ENCODE measurements at regions of chr18 and their contacts with region 1.

Region 1: GRCh38 chr18:33201509-33201926 is 239.0 kb downstream of the CCDC178 start:
- DNase-seq: peak in 41 of 42 donors; percentile 2 to 84 (median 46)

Region 2: GRCh38 chr18:32714571-32715148 is 486.9 kb before region 1 on chr18:
- intact Hi-C with region 1: loop called (anchors 10 kb)
- DNase-seq: peak in 28 of 42 donors; percentile 19 to 76 (median 48)

Measured in head of caudate nucleus (tissue), 42 donors.